ENCODE measurements at regions of chr12 and their contacts with region 1.

Region 1: GRCh38 chr12:88884600-88884999 is 304.3 kb upstream of the KITLG start:
- DNase-seq: no peak
- H3K4me3 ChIP-seq: no peak overlapping the region
- H3K27ac ChIP-seq: no peak overlapping the region
- H3K4me1 ChIP-seq: no peaks in the 10 kb centered on the region
- H3K27me3 ChIP-seq: no peaks in the 10 kb centered on the region
- CTCF ChIP-seq: no peak
- EP300 ChIP-seq: no peak
- POLR2A ChIP-seq: no peak

Region 2: GRCh38 chr12:89208661-89209096 is 324.1 kb after region 1 on chr12:
- in situ Hi-C with region 1: no loop called
- intact Hi-C with region 1: loop called (anchors 10 kb)
- DNase-seq: no peak
- H3K4me3 ChIP-seq: no peak overlapping the region
- H3K27ac ChIP-seq: no peak overlapping the region
- H3K4me1 ChIP-seq: peaks cover 0 to 17% (median 9%) of the 10 kb centered on the region in 4 donors
- H3K27me3 ChIP-seq: no peaks in the 10 kb centered on the region
- CTCF ChIP-seq: no peak
- EP300 ChIP-seq: no peak
- POLR2A ChIP-seq: no peak

Measured in transverse colon (tissue), 4 donors.